ENCODE measurements at regions of chr15 and their contacts with region 1.

Region 1: DNA sequence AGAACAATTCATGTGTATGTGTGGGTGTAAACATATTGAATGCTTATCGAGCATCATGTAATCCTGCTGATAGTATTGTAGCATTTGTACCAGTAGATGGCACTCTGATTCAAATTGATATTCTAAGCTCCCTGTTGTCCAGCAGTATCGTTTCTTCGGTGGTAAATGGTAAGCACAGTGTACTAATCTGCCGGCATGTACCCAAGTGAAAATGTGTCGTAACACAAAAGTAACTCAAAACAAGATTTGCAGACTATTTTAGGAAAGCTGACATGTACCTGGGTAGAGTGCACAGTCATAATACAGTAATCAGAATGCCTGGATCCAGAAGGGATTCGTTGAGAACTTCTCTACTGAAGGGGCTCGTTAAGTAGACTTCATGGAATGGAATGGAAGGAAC is 31.7 kb upstream of the MNS1 start:
- DNase-seq: peak in 3 of 14 experiments; percentile 44 to 65 (median 58)
- ATAC-seq: peak; percentile 49
- H3K4me3 ChIP-seq: no peak overlapping the region
- H3K4me3 Mint-ChIP-seq: no peak overlapping the region
- H3K27ac ChIP-seq: no peak overlapping the region
- H3K27ac Mint-ChIP-seq: no peak overlapping the region
- H3K4me1 ChIP-seq: no peaks in the 10 kb centered on the region
- H3K4me1 Mint-ChIP-seq: peaks cover 4% of the 10 kb centered on the region
- H3K27me3 ChIP-seq: peaks cover 0 to 4% of the 10 kb centered on the region in 2 experiments
- H3K27me3 Mint-ChIP-seq: peaks cover 15% of the 10 kb centered on the region
- CTCF ChIP-seq: peak; percentile 72

Region 2: GRCh38 chr15:56524915-56525314 is 28.3 kb after region 1 on chr15:
- CTCF ChIA-PET with region 1: no interaction called
- POLR2A ChIA-PET with region 1: no interaction called
- intact Hi-C with region 1: no loop called
- DNase-seq: no peak
- ATAC-seq: no peak
- H3K4me3 ChIP-seq: no peak overlapping the region
- H3K4me3 Mint-ChIP-seq: no peak overlapping the region
- H3K27ac ChIP-seq: no peak overlapping the region
- H3K27ac Mint-ChIP-seq: no peak overlapping the region
- H3K4me1 ChIP-seq: no peaks in the 10 kb centered on the region
- H3K4me1 Mint-ChIP-seq: no peaks in the 10 kb centered on the region
- H3K27me3 ChIP-seq: no peaks in the 10 kb centered on the region
- H3K27me3 Mint-ChIP-seq: peaks cover 5% of the 10 kb centered on the region
- CTCF ChIP-seq: no peak

Region 3: GRCh38 chr15:56568466-56569167 is 72.0 kb after region 1 on chr15:
- CTCF ChIA-PET with region 1: no interaction called
- POLR2A ChIA-PET with region 1: no interaction called
- intact Hi-C with region 1: no loop called
- DNase-seq: no peak
- ATAC-seq: no peak
- H3K4me3 ChIP-seq: no peak overlapping the region
- H3K4me3 Mint-ChIP-seq: no peak overlapping the region
- H3K27ac ChIP-seq: no peak overlapping the region
- H3K27ac Mint-ChIP-seq: no peak overlapping the region
- H3K4me1 ChIP-seq: no peaks in the 10 kb centered on the region
- H3K4me1 Mint-ChIP-seq: no peaks in the 10 kb centered on the region
- H3K27me3 ChIP-seq: no peaks in the 10 kb centered on the region
- H3K27me3 Mint-ChIP-seq: no peaks in the 10 kb centered on the region
- CTCF ChIP-seq: no peak

Region 4: GRCh38 chr15:56869573-56869972 is 372.9 kb after region 1 on chr15:
- CTCF ChIA-PET with region 1: no interaction called
- POLR2A ChIA-PET with region 1: no interaction called
- intact Hi-C with region 1: loop called in 1 of 2 experiments (anchors 5 kb)
- DNase-seq: peak in 3 of 14 experiments; percentile 8 to 25 (median 17)
- ATAC-seq: no peak
- H3K4me3 ChIP-seq: no peak overlapping the region
- H3K4me3 Mint-ChIP-seq: no peak overlapping the region
- H3K27ac ChIP-seq: no peak overlapping the region
- H3K27ac Mint-ChIP-seq: no peak overlapping the region
- H3K4me1 ChIP-seq: no peaks in the 10 kb centered on the region
- H3K4me1 Mint-ChIP-seq: no peaks in the 10 kb centered on the region
- H3K27me3 ChIP-seq: no peaks in the 10 kb centered on the region
- H3K27me3 Mint-ChIP-seq: no peaks in the 10 kb centered on the region
- CTCF ChIP-seq: peak; percentile 15